Sciatic nerve (tissue), 2 donors: ENCODE measurements at regions of chr20 and their contacts with region 1.

Region 1: DNA sequence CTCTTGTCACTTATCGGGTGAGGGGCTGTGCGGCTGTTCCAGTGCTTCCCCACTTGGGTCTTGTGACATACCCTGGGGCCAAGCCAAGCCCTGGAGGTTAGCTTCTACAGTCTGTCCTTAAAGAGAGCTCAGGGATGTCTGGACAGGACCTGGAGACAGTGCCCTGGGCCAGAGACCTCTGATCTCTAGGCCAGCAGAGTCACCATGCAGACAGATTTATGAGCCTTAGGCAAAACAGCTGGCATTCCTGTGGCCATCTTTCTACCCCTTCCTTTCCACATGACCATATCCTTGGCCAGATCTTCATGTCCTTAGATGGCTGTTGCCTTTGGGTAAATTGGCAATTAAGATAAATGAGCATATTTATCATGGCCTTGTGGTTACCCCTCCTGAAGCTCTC is 678.6 kb downstream of the MAFB start:
- DNase-seq: no peak
- ATAC-seq: no peak

Region 2: GRCh38 chr20:40029589-40029988 is 19.1 kb after region 1 on chr20:
- intact Hi-C with region 1: loop called (anchors 1 kb)
- DNase-seq: no peak
- ATAC-seq: no peak

Region 3: DNA sequence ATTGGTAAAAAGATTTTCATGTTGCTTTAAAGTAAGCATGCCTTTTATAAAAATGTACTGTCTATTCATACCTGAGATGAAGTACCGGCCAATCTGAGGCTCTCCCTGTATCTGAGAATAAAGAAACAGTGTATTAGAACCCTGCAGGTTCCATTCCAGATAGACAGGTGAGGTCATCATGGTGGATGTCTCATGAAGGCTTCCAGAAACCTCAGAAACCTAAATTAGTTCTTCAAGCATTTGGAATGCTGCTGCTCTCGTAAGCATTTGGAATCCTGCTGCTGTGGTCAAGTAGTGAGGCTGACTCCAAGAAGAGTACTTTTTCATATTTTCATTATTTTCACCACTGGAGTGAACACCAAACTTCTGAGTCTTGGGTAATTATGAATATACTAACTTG is 36.2 kb after region 1 on chr20:
- intact Hi-C with region 1: no loop called
- DNase-seq: no peak
- ATAC-seq: no peak

Region 4: GRCh38 chr20:40073535-40074111 is 63.1 kb after region 1 on chr20:
- intact Hi-C with region 1: no loop called
- DNase-seq: no peak
- ATAC-seq: peak; percentile 60